ENCODE measurements at regions of chr4 and their contacts with region 1.

Region 1: DNA sequence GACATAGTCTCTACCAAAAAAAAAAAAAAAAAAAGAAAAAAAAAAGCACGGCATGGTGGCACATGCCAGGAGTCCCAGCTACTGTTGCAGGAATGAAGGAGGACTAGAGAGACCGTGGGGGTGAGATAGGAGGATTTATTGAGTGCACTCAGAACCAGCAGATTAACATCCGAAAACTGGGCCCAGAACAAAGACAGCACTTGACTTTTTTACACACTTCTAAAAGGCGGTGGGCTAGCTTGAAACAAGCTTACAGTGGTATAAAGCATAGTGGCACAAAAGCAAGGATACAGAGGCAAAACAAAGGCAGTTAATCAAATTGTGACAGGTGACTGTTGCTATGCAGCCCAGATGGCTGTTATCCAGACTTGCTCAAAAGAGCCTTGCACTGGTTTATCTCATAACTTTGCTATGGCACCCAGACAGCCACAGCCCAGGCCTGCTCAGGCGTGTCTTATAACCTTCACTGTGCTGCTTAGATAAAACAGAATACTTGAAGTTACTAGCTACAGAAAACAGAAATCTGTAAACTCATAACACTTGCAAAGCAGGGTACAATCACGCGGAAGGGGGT is 9.9 kb upstream of the PI4K2B start:
- H3K4me3 ChIP-seq: no peak overlapping the region
- H3K27ac ChIP-seq: no peak overlapping the region
- H3K4me1 ChIP-seq: no peaks in the 10 kb centered on the region
- CTCF ChIP-seq: no peak

Region 2: DNA sequence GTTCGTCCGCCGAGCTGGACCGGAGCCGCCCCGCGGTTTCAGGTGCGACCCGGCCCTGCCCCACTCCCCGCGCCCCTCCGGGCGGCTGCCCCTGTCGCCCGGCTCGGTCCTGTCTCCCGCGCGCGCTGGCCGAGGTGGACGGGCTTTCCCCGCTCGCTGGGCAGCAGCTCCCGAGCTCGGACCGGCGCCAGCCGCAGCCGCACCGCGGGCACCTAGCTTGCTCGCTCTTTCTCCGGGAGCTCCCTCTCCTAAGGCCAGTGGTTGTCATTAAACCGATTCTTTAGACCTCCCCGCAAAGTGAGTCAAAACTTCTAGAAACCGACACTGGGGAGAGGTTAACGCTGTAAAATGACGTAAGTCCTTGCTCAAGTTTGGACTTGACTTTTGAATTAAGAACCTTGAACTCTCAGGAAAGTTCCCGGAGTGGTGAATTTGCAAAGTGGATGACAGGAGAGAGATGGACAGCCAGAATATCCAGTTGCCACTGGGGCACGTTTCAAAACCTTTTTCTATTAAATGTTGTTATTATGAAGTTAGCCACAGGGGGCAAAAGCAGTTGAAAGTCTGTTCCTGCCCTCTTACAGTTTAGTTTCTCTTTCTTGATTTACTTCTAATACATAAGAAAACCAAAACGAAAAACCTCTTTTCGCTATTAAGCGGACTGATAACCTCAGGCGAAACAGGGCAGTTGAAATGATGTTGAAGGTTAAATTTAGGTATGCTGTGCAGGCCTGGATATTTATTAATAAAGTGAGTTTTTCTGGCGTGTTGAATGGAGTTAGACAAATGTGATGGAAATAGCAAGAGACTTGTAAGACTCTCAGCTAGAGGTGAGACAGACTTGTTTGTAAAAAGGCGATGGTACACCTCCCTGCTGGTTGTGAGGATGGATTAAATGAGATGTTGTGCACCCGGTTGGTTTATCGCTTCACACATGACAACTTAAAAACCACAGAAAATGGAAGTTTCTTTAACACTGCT is 10.8 kb after region 1 on chr4:
- CTCF ChIA-PET with region 1: interaction called, 5 read pairs
- POLR2A ChIA-PET with region 1: interaction called, 12 read pairs
- H3K4me3 ChIP-seq: peak overlapping the region; percentile 78
- H3K27ac ChIP-seq: peak overlapping the region; percentile 80
- H3K4me1 ChIP-seq: no peaks in the 10 kb centered on the region
- CTCF ChIP-seq: no peak

Measured in HEK293 (cell line).